Heart left ventricle (tissue), 16 donors: ENCODE measurements at regions of chr21 and their contacts with region 1.

Region 1: DNA sequence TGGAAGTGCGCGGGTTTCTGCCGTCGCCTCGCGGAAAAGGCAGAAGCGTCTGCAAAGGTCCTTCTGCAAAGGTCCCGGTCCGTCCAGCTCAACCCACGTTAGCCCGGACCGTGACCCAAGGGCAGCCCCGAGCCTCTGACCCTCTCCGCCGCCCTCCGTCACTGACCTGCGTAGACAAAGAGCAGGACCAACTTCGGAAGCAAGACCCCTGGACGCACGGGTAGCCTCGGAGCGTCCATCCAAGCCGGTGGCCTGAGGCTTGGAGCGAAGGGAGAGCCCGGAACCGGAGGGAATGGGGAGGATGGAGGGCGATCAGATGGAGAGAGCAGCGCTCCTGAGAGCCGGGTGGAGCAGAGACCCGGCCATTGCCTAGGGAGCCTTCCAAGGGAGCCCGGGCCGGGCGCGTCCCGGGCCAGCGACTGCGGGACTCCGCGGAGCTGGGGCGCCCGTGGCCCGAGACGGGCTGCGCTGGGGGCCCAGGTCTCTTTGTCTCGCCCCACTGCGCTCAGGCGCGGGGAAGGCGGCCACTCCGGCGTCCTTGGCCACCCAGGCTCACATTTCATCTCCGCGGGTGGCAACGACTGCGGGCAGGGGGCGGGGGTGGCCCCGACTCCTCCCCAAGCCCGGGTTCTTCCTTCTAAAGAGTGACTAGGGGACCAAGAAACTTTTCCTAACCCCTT is at the start of gene CYYR1:
- DNase-seq: peak in 4 of 5 donors; percentile 29 to 68 (median 38)
- ATAC-seq: peak in 3 of 4 donors; percentile 53 to 69 (median 55)
- H3K4me3 ChIP-seq: peak within 1 kb of the TSS; percentile 45 to 68 (median 60)
- H3K27ac ChIP-seq: peak within 1 kb of the TSS; percentile 75 to 91 (median 85)
- H3K4me1 ChIP-seq: no peaks in the 10 kb centered on the region
- H3K27me3 ChIP-seq: peaks cover 0 to 13% (median 8%) of the 10 kb centered on the region in 9 donors
- CTCF ChIP-seq: no peak
- POLR2A ChIP-seq: peak in 1 of 2 donors; percentile 43
- total RNA-seq, gene CYYR1: 12.1 to 37.6 (median 16.9) TPM

Region 2: GRCh38 chr21:25881525-25882376 is 691.1 kb before region 1 on chr21:
- intact Hi-C with region 1: loop called in 2 of 10 experiments (anchors 10 kb)
- DNase-seq: peak; percentile 49 to 81 (median 68)
- ATAC-seq: peak; percentile 48 to 76 (median 76)
- H3K4me3 ChIP-seq: no peak overlapping the region
- H3K27ac ChIP-seq: no peak overlapping the region
- H3K4me1 ChIP-seq: peaks cover 0 to 20% (median 4%) of the 10 kb centered on the region in 12 donors
- H3K27me3 ChIP-seq: no peaks in the 10 kb centered on the region
- CTCF ChIP-seq: peak; percentile 88 to 98 (median 94)
- POLR2A ChIP-seq: no peak

Region 3: DNA sequence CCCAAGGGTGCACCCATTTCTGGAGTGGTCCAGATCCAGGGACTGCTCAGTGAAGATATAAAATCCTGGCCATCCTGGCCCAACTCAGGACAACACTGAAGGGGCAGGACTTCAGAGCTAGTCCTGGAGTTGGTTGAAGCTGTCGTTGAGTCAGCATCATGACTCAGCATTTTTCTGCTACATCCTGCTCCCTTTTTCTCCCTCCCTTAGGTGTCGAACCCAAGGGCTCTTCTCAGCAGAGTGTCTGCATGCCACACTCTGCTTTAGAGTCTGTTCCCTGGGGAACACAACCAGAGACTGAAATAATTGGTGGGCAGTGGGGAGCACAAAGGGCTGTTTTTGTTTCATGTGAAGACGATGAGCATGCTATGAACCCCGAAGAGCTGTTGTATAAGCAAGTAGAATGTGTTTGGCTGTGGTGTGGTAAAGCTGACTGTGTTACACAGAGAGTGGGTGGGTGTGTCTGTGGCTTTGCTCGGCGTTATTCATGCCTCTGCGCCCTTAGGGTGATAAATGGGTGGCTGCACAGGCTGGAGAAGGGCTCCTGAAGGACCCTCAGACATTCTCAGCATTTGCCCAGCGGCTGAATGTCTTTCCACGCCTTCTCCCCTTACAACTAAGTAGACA is 167.0 kb before region 1 on chr21:
- intact Hi-C with region 1: loop called in 3 of 10 experiments (anchors 5 to 10 kb)
- DNase-seq: no peak
- ATAC-seq: no peak
- H3K4me3 ChIP-seq: no peak overlapping the region
- H3K27ac ChIP-seq: no peak overlapping the region
- H3K4me1 ChIP-seq: peaks cover 0 to 11% (median 0%) of the 10 kb centered on the region in 12 donors
- H3K27me3 ChIP-seq: no peaks in the 10 kb centered on the region
- CTCF ChIP-seq: no peak
- POLR2A ChIP-seq: no peak

Region 4: GRCh38 chr21:26489781-26490180 is 83.1 kb before region 1 on chr21:
- intact Hi-C with region 1: loop called in 2 of 10 experiments (anchors 10 kb)
- DNase-seq: no peak
- ATAC-seq: no peak
- H3K4me3 ChIP-seq: no peak overlapping the region
- H3K27ac ChIP-seq: no peak overlapping the region
- H3K4me1 ChIP-seq: peaks cover 0 to 4% (median 0%) of the 10 kb centered on the region in 12 donors
- H3K27me3 ChIP-seq: no peaks in the 10 kb centered on the region
- CTCF ChIP-seq: no peak
- POLR2A ChIP-seq: no peak